GM18951 (cell line): ENCODE measurements at regions of chr4 and their contacts with region 1.

Region 1: GRCh38 chr4:13559413-13559812 is 15.1 kb upstream of the NKX3-2 start:
- POLR2A ChIP-seq: no peak

Region 2: DNA sequence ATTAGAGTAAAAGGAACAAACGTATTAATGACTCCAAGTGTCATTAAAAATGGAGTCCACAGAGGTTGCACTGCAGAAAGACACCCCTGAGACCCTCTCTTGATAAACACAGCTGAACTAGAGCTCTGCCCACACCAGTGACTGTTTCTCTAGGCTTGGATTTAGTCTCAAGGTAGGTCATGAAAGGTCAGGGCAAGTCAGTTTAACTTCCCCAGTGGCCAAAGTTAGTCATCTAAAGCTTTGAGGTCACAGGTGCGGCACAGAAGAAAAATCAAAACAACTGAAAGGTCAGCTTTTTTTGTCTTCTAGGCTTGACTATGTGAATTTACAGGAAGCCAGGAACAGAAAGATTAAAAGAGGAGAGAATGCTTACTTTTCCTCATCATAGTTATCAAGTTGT is 824.8 kb before region 1 on chr4:
- in situ Hi-C with region 1: loop called (anchors 10 kb)
- POLR2A ChIP-seq: no peak

Region 3: GRCh38 chr4:13329963-13330362 is 229.4 kb before region 1 on chr4:
- in situ Hi-C with region 1: no loop called
- POLR2A ChIP-seq: no peak

Region 4: GRCh38 chr4:13988353-13989305 is 429.2 kb after region 1 on chr4:
- in situ Hi-C with region 1: no loop called
- POLR2A ChIP-seq: no peak